CD8-positive, alpha-beta memory T cell (primary cell): ENCODE measurements at regions of chr16 and their contacts with region 1.

Region 1: DNA sequence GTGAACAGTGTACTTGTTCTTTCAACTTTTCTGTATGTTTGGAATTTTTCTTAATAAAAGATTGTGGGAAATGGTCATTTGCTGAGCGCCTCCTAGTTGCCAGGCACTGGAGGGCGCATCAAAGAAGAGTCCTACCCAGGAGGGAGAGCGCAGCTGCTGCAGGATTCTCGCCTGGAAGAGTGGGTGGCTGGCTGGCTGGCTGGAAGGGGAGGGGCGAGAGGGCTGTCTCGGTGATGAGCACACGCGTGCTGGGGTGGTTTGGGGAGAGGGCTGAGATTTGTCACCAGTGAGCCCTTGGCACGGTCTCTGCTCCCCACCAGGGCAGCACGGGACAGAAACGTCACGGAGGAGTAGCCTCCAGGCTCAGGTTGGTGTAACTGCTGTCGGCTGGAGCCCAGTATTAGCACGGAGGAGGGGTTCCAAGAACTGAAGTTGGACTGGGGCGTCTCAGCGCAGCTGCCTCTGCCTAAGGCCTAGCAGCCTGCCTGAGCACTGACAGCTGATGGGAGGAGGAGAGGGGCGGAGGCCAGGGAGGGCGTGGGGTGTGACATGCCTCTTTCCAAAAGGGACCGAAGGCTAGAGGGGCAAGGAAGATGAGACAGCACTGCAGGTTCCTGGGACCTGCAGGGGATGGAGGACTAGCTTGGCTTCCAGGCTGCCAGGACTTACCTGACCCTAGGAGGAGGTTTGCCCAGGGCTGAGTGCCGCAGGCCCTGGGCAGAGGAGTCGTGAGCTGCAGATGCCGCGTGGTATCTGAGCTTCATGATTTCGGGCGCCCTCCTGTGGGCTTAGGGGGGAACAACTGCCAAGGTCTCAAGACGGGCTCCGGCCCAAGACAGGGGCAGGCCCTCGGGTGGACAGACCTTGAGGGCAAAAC is 5.7 kb downstream of the LDHD start:
- DNase-seq: peak; percentile 67 to 85 (median 71)
- H3K4me3 ChIP-seq: peak overlapping the region; percentile 15
- H3K4me3 Mint-ChIP-seq: peak overlapping the region in 5 of 7 donors; percentile 32 to 66 (median 50)
- H3K27ac ChIP-seq: no peak overlapping the region
- H3K27ac Mint-ChIP-seq: peak overlapping the region in 6 of 8 donors; percentile 68 to 96 (median 85)
- H3K4me1 ChIP-seq: peaks cover 32% of the 10 kb centered on the region
- H3K4me1 Mint-ChIP-seq: peaks cover 28 to 31% (median 29%) of the 10 kb centered on the region in 3 donors
- H3K27me3 ChIP-seq: no peaks in the 10 kb centered on the region
- H3K27me3 Mint-ChIP-seq: peaks cover 0 to 9% of the 10 kb centered on the region in 2 donors

Region 2: GRCh38 chr16:74813109-74813641 is 297.7 kb before region 1 on chr16:
- CTCF ChIA-PET with region 1: interaction called, 15 read pairs
- POLR2A ChIA-PET with region 1: no interaction called
- DNase-seq: peak; percentile 40 to 65 (median 47)
- H3K4me3 ChIP-seq: no peak overlapping the region
- H3K4me3 Mint-ChIP-seq: no peak overlapping the region
- H3K27ac ChIP-seq: no peak overlapping the region
- H3K27ac Mint-ChIP-seq: no peak overlapping the region
- H3K4me1 ChIP-seq: peaks cover 7% of the 10 kb centered on the region
- H3K4me1 Mint-ChIP-seq: peaks cover 0 to 6% (median 5%) of the 10 kb centered on the region in 3 donors
- H3K27me3 ChIP-seq: no peaks in the 10 kb centered on the region
- H3K27me3 Mint-ChIP-seq: peaks cover 3 to 7% of the 10 kb centered on the region in 2 donors

Region 3: GRCh38 chr16:74991593-74992403 is 119.1 kb before region 1 on chr16:
- CTCF ChIA-PET with region 1: interaction called, 27 read pairs
- POLR2A ChIA-PET with region 1: no interaction called
- DNase-seq: no peak
- H3K4me3 ChIP-seq: no peak overlapping the region
- H3K4me3 Mint-ChIP-seq: no peak overlapping the region
- H3K27ac ChIP-seq: no peak overlapping the region
- H3K27ac Mint-ChIP-seq: peak overlapping the region in 1 of 8 donors; percentile 54
- H3K4me1 ChIP-seq: no peaks in the 10 kb centered on the region
- H3K4me1 Mint-ChIP-seq: no peaks in the 10 kb centered on the region
- H3K27me3 ChIP-seq: no peaks in the 10 kb centered on the region
- H3K27me3 Mint-ChIP-seq: peaks cover 3 to 4% of the 10 kb centered on the region in 2 donors

Region 4: DNA sequence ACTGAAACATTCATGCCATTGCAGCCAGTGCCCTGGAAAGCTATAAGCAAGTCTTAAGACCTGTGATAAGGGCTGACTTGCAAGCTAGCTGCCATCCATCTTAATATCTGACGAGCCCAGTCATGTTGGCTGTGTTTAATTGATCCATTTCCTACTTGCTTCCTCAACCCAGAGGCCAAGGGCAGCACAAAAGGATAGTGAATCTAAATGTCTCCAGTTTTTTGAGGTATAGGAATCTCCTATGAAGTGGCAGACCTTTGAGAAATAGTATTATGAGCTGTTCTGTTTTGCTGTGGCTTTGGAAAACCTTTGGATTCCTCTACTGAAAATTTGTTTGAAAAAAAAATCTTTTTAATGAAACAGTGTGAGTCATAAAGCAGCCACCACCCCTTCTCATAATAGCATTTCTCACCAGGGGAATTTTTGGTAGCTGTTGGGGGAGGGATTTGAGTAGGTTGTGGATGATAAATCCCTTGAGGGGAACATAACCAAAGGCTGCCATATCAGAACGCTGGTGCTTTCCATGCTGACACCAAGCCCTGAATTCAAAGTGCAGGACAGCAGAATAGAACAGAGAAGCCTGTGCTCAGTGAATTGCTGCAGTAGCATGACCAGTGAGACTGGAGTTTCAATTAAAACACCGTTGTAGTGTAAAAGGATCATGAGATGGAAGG is 99.1 kb before region 1 on chr16:
- CTCF ChIA-PET with region 1: interaction called, 18 read pairs
- POLR2A ChIA-PET with region 1: no interaction called
- DNase-seq: no peak
- H3K4me3 ChIP-seq: no peak overlapping the region
- H3K4me3 Mint-ChIP-seq: peak overlapping the region in 3 of 7 donors; percentile 6 to 66 (median 64)
- H3K27ac ChIP-seq: peak overlapping the region; percentile 27
- H3K27ac Mint-ChIP-seq: peak overlapping the region in 6 of 8 donors; percentile 0 to 92 (median 34)
- H3K4me1 ChIP-seq: peaks cover 11% of the 10 kb centered on the region
- H3K4me1 Mint-ChIP-seq: peaks cover 12 to 22% (median 20%) of the 10 kb centered on the region in 3 donors
- H3K27me3 ChIP-seq: no peaks in the 10 kb centered on the region
- H3K27me3 Mint-ChIP-seq: no peaks in the 10 kb centered on the region

Region 5: GRCh38 chr16:75099756-75100602 is 10.9 kb before region 1 on chr16:
- CTCF ChIA-PET with region 1: interaction called, 22 read pairs
- POLR2A ChIA-PET with region 1: no interaction called
- DNase-seq: peak in 3 of 5 donors; percentile 26 to 29 (median 28)
- H3K4me3 ChIP-seq: no peak overlapping the region
- H3K4me3 Mint-ChIP-seq: peak overlapping the region in 6 of 7 donors; percentile 41 to 65 (median 52)
- H3K27ac ChIP-seq: peak overlapping the region; percentile 33
- H3K27ac Mint-ChIP-seq: peak overlapping the region; percentile 83 to 97 (median 95)
- H3K4me1 ChIP-seq: peaks cover 31% of the 10 kb centered on the region
- H3K4me1 Mint-ChIP-seq: peaks cover 30 to 37% (median 33%) of the 10 kb centered on the region in 3 donors
- H3K27me3 ChIP-seq: no peaks in the 10 kb centered on the region
- H3K27me3 Mint-ChIP-seq: no peaks in the 10 kb centered on the region

Region 6: DNA sequence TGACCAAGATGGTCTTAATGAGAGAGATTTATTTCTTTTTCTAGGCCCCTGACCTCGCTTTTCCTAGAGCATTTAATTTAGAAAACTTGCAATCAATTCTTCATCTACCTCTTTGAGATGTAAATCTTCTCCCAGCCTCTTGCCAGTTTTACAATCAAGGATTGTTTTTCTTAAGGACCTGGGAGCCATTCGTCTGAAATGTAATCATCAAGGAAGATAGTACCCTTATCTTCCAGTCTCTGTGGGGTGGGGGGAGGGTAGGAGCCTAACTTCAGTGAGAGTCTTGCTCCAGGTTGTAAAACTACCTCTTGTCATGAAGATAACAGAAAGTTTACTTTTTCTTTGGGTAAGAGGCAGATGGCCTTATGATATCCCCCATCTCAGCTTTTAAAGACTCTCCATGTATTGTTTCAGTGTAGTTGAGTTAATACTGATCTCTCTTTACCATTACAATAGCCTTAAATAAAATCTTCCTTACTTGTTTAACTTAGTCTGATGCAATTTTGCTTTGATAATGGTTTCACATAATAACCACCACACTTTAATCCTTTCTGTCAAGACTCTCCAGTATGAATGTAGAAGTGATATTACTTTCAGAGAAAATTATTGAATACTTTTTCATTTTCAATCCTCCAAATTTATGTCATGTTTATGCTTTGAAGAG is 725.6 kb after region 1 on chr16:
- CTCF ChIA-PET with region 1: no interaction called
- POLR2A ChIA-PET with region 1: no interaction called
- DNase-seq: no peak
- H3K4me3 ChIP-seq: no peak overlapping the region
- H3K4me3 Mint-ChIP-seq: no peak overlapping the region
- H3K27ac ChIP-seq: no peak overlapping the region
- H3K27ac Mint-ChIP-seq: no peak overlapping the region
- H3K4me1 ChIP-seq: no peaks in the 10 kb centered on the region
- H3K4me1 Mint-ChIP-seq: no peaks in the 10 kb centered on the region
- H3K27me3 ChIP-seq: no peaks in the 10 kb centered on the region
- H3K27me3 Mint-ChIP-seq: peaks cover 3 to 38% of the 10 kb centered on the region in 2 donors